Activated B cell treated with CpG ODN at 0.5 μM for 24 hours (primary cell): ENCODE measurements at regions of chr10 and their contacts with region 1.

Region 1: GRCh38 chr10:110918643-110919363 is at the start of gene BBIP1:
- DNase-seq: peak; percentile 89
- ATAC-seq: peak; percentile 84
- H3K4me3 Mint-ChIP-seq: peak within 1 kb of the TSS; percentile 99
- H3K27ac Mint-ChIP-seq: peak within 1 kb of the TSS; percentile 99
- H3K4me1 Mint-ChIP-seq: peaks cover 51% of the 10 kb centered on the region
- H3K27me3 Mint-ChIP-seq: no peaks in the 10 kb centered on the region
- CTCF ChIP-seq: no peak
- total RNA-seq, gene BBIP1: 28.4 and 29.0 TPM in 2 replicates

Region 2: DNA sequence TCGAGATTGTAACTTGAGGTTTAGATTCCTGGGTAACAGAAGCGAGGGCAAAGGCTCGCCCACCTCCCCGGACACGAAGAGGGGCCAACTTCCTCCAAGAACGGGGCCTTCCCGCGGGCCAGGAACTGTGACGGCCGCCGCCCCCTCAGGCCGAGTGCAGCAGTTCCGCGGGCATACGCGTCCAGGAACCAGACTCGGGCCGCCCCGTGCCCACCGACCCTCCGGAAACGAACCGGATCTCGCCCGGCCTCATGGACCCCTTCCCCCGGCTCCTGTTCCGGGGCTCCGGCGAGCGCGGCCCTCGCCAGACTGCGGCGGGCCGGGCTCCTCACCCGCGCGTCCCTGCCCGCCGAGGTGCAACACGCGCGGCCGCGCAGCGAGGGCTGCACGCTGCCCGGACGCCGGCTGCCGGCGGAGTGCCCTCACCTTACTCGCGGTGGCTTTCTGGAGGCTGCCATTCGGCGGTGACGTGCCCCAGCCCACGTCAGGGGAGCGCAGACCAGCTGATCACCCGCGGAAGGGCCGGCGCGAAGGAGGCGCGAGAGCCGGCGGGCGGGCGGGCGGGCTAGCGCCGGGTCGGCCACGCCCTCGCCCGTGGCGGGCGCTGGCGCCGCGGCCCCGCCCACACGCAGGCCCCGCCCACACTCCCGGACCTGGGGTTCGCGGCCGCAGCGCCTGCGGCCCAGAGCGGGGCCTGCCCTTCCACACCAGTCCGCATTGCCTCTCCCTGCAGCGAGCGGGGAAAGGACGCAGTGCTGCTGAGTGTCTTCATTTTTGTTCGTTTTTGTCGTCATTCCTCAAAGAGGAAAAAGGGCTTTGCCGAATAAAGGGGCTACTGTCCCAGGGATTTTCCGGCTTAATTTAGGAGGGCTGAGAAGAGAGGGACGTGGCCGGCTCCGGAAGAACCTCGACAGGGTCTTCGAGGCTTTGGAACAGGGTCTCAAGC is 995.6 kb before region 1 on chr10 and contains the start of gene XPNPEP1:
- CTCF ChIA-PET with region 1: no interaction called
- POLR2A ChIA-PET with region 1: interaction called, 7 read pairs
- intact Hi-C with region 1: loop called (anchors 2 kb)
- DNase-seq: peak; percentile 85
- ATAC-seq: peak; percentile 94
- H3K4me3 Mint-ChIP-seq: peak within 1 kb of the TSS; percentile 88
- H3K27ac Mint-ChIP-seq: peak within 1 kb of the TSS; percentile 81
- H3K4me1 Mint-ChIP-seq: peaks cover 36% of the 10 kb centered on the region
- H3K27me3 Mint-ChIP-seq: peaks cover 2% of the 10 kb centered on the region
- CTCF ChIP-seq: no peak
- total RNA-seq, gene XPNPEP1: 53.5 and 70.6 TPM in 2 replicates

Region 3: GRCh38 chr10:110210674-110211464 is 707.9 kb before region 1 on chr10:
- CTCF ChIA-PET with region 1: no interaction called
- POLR2A ChIA-PET with region 1: interaction called, 4 read pairs
- intact Hi-C with region 1: loop called (anchors 1 kb)
- DNase-seq: peak; percentile 84
- ATAC-seq: peak; percentile 73
- H3K4me3 Mint-ChIP-seq: peak overlapping the region; percentile 87
- H3K27ac Mint-ChIP-seq: peak overlapping the region; percentile 79
- H3K4me1 Mint-ChIP-seq: peaks cover 55% of the 10 kb centered on the region
- H3K27me3 Mint-ChIP-seq: peaks cover 2% of the 10 kb centered on the region
- CTCF ChIP-seq: no peak

Region 4: DNA sequence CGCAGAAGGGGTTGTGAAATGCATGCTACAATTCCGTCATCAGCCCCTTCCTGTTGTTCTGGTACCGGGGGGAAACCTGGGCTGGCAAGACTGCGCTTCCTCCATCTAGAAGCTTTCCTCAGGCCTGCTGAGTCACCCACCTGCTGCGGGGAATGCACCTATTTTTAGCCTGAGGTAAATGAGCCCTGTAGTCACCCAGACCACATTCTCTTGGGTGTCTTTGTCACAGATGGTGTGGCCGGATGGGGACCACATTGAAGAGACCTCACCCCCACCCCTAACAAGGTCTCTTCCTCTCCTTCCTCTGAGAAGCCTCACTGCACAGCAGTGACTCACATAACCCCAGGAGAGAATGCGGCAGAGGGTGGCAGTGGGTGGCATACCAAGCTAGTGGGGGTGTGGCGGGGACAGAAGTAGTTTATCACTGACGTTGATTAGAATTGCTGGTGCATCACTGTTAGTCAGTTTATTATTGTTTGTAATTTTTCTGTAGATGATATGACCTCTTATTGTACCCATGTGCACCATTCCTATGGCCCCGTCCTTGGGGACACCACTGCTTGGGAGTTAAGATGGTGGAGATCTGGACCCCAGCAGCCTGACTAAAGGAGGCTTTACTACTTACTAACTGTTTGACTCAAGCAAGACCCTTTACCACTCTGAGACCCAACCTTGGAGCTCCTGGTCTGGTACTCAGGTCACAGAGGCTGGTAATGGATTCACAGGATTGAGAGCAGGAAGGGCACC is 504.1 kb before region 1 on chr10:
- CTCF ChIA-PET with region 1: no interaction called
- POLR2A ChIA-PET with region 1: no interaction called
- intact Hi-C with region 1: loop called (anchors 1 kb)
- DNase-seq: peak; percentile 72
- ATAC-seq: peak; percentile 89
- H3K4me3 Mint-ChIP-seq: peak overlapping the region; percentile 50
- H3K27ac Mint-ChIP-seq: peak overlapping the region; percentile 65
- H3K4me1 Mint-ChIP-seq: peaks cover 71% of the 10 kb centered on the region
- H3K27me3 Mint-ChIP-seq: peaks cover 6% of the 10 kb centered on the region
- CTCF ChIP-seq: no peak

Region 5: DNA sequence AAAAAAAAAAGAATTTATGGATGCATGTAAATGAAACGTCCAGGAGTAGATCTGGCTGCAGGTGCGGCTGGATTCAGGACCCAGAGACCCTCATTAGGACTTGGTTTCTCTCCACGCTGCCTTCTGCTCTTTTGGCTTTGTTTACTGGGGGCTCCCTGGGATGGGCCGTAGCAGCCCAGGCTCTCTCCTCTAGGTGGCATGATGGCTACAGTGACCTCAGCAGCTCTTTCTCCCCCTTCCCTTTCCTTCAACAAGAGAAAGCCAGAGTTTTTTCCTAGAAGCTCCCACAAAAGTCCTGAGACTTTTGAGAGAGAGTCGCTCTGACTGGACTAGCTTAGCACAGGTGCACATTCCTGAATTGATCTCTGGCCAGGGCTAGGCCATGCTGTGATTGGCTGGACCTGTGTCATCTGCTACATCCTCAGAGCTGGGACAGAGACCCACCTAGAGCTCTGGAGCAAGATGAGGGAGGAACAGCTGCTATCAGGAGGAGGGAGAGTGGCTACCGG is 114.9 kb before region 1 on chr10:
- CTCF ChIA-PET with region 1: interaction called, 5 read pairs
- POLR2A ChIA-PET with region 1: interaction called, 7 read pairs
- intact Hi-C with region 1: loop called (anchors 1 kb)
- DNase-seq: peak; percentile 29
- ATAC-seq: peak; percentile 70
- H3K4me3 Mint-ChIP-seq: no peak overlapping the region
- H3K27ac Mint-ChIP-seq: peak overlapping the region; percentile 54
- H3K4me1 Mint-ChIP-seq: peaks cover 26% of the 10 kb centered on the region
- H3K27me3 Mint-ChIP-seq: no peaks in the 10 kb centered on the region
- CTCF ChIP-seq: no peak

Region 6: GRCh38 chr10:110871298-110872084 is 47.3 kb before region 1 on chr10 and contains the start of gene PDCD4:
- CTCF ChIA-PET with region 1: no interaction called
- POLR2A ChIA-PET with region 1: interaction called, 27 read pairs
- intact Hi-C with region 1: loop called (anchors 1 kb)
- DNase-seq: peak; percentile 87
- ATAC-seq: peak; percentile 71
- H3K4me3 Mint-ChIP-seq: peak within 1 kb of the TSS; percentile 94
- H3K27ac Mint-ChIP-seq: peak within 1 kb of the TSS; percentile 97
- H3K4me1 Mint-ChIP-seq: peaks cover 76% of the 10 kb centered on the region
- H3K27me3 Mint-ChIP-seq: no peaks in the 10 kb centered on the region
- CTCF ChIP-seq: no peak
- total RNA-seq, gene PDCD4: 143 and 145 TPM in 2 replicates

Region 7: GRCh38 chr10:110977662-110978061 is 58.9 kb after region 1 on chr10:
- CTCF ChIA-PET with region 1: no interaction called
- POLR2A ChIA-PET with region 1: no interaction called
- intact Hi-C with region 1: loop called (anchors 5 kb)
- DNase-seq: no peak
- ATAC-seq: no peak
- H3K4me3 Mint-ChIP-seq: no peak overlapping the region
- H3K27ac Mint-ChIP-seq: no peak overlapping the region
- H3K4me1 Mint-ChIP-seq: peaks cover 79% of the 10 kb centered on the region
- H3K27me3 Mint-ChIP-seq: no peaks in the 10 kb centered on the region
- CTCF ChIP-seq: no peak